ENCODE measurements at regions of chr2 and their contacts with region 1.

Region 1: DNA sequence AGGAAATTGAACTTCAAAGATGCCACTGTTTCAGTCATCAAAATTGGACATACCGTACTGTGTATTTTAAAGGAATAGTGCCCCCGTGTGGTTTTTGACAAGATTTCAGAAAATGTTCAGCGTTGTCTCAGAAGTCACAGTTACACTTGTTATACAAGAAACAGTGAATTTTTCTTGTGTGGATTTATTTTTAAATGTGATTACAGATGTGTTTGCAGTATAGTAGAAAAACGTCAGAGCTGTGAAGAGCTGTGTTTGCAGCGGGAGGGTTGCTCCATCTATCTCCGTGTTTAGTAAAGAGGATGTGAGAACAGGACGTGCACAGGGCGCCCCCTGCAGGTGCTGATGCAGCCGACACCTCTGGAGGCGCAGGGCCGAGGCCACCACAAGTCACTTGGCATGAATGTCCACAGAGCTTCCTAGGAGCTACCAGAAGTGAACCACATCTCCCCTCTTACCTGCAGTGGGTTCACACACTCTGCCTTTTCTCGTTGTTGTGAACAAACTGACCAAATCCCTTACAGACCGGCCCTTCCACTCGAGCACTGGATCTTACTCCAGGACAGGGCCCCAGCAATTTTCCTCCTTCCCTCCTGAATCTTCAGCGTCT is 73.1 kb downstream of the CACNB4 start:
- DNase-seq: peak; percentile 79
- H3K4me3 Mint-ChIP-seq: peak overlapping the region; percentile 60
- H3K27ac Mint-ChIP-seq: no peak overlapping the region
- H3K4me1 Mint-ChIP-seq: peaks cover 24% of the 10 kb centered on the region
- H3K27me3 Mint-ChIP-seq: peaks cover under 1% of the 10 kb centered on the region
- CTCF ChIP-seq: peak; percentile 93

Region 2: GRCh38 chr2:151481744-151482143 is 544.0 kb before region 1 on chr2:
- CTCF ChIA-PET with region 1: interaction called, 11 read pairs
- POLR2A ChIA-PET with region 1: no interaction called
- intact Hi-C with region 1: no loop called
- DNase-seq: no peak
- H3K4me3 Mint-ChIP-seq: no peak overlapping the region
- H3K27ac Mint-ChIP-seq: no peak overlapping the region
- H3K4me1 Mint-ChIP-seq: no peaks in the 10 kb centered on the region
- H3K27me3 Mint-ChIP-seq: no peaks in the 10 kb centered on the region
- CTCF ChIP-seq: no peak

Region 3: DNA sequence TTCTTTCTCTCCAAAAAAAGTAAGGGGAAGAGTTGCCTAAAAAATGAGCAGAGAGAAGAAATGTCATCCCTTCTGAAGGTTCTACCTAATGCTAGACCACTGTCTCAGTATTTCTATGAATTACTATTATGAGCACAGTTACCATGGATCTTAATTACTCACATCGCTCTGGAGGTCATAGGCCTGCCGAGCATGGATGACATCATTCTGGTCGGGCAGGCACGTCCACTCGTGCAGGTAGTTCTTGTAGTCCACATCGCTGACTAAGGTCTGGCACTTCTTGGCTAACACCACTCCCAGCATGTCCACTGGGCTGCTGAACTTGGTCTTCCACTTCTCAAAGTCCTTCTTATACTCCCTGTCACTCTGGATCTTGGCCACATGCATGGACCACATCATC is 398.4 kb before region 1 on chr2:
- CTCF ChIA-PET with region 1: interaction called, 5 read pairs
- POLR2A ChIA-PET with region 1: no interaction called
- intact Hi-C with region 1: loop called (anchors 10 kb)
- DNase-seq: no peak
- H3K4me3 Mint-ChIP-seq: no peak overlapping the region
- H3K27ac Mint-ChIP-seq: no peak overlapping the region
- H3K4me1 Mint-ChIP-seq: no peaks in the 10 kb centered on the region
- H3K27me3 Mint-ChIP-seq: no peaks in the 10 kb centered on the region
- CTCF ChIP-seq: no peak

Region 4: GRCh38 chr2:151782378-151783132 is 243.2 kb before region 1 on chr2:
- CTCF ChIA-PET with region 1: interaction called, 8 read pairs
- POLR2A ChIA-PET with region 1: interaction called, 3 read pairs
- intact Hi-C with region 1: loop called (anchors 10 kb)
- DNase-seq: no peak
- H3K4me3 Mint-ChIP-seq: no peak overlapping the region
- H3K27ac Mint-ChIP-seq: peak overlapping the region; percentile 61
- H3K4me1 Mint-ChIP-seq: peaks cover 6% of the 10 kb centered on the region
- H3K27me3 Mint-ChIP-seq: no peaks in the 10 kb centered on the region
- CTCF ChIP-seq: no peak

Region 5: DNA sequence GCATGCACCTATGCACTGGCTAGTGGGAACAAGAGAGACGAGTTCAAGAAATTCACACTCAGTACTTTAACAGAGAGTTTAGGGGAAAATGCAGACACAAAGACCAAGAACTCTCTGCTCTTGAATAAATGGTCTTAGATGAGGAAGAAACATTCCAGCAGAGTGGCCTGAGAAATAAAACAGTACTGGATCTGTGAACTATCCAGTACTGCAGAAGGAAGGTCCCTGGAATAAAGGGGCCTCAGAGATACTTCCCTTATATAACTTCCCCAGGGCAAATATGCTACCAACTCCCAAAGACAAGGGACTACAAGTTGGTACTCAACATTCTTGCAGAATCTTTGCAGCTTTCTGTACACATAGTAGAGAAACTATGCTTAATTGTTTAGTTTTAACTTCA is 126.6 kb before region 1 on chr2:
- CTCF ChIA-PET with region 1: no interaction called
- POLR2A ChIA-PET with region 1: no interaction called
- intact Hi-C with region 1: no loop called
- DNase-seq: no peak
- H3K4me3 Mint-ChIP-seq: no peak overlapping the region
- H3K27ac Mint-ChIP-seq: no peak overlapping the region
- H3K4me1 Mint-ChIP-seq: no peaks in the 10 kb centered on the region
- H3K27me3 Mint-ChIP-seq: no peaks in the 10 kb centered on the region
- CTCF ChIP-seq: no peak

Region 6: DNA sequence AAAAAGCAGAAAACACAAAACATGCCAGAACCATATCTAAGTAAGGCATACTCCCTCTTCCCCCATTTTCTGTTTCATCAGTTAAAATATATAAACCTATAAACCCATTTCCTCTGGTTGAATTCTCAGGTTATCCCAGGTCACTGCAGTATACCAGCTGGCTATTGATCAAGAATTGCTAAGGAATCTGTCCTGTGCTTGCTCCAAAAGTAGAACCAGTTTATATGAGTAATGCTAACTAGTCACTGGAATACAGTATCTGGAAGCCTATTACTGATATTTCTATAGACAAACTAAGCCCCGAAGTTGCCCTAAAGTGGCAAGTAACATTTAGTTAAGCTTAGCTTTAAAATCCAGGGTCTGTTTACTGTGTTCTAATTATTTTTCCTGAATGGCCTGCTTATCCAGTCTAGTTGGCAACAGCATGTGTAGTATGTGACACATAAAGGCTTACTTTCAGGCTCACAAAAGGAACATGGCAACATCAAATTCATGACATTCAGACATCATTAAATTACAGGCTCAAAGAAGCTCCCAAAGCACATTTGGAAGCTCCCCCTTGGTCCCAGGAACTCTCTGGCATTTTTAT is 94.7 kb before region 1 on chr2:
- CTCF ChIA-PET with region 1: interaction called, 12 read pairs
- POLR2A ChIA-PET with region 1: no interaction called
- intact Hi-C with region 1: no loop called
- DNase-seq: no peak
- H3K4me3 Mint-ChIP-seq: no peak overlapping the region
- H3K27ac Mint-ChIP-seq: no peak overlapping the region
- H3K4me1 Mint-ChIP-seq: peaks cover 20% of the 10 kb centered on the region
- H3K27me3 Mint-ChIP-seq: no peaks in the 10 kb centered on the region
- CTCF ChIP-seq: no peak

Region 7: DNA sequence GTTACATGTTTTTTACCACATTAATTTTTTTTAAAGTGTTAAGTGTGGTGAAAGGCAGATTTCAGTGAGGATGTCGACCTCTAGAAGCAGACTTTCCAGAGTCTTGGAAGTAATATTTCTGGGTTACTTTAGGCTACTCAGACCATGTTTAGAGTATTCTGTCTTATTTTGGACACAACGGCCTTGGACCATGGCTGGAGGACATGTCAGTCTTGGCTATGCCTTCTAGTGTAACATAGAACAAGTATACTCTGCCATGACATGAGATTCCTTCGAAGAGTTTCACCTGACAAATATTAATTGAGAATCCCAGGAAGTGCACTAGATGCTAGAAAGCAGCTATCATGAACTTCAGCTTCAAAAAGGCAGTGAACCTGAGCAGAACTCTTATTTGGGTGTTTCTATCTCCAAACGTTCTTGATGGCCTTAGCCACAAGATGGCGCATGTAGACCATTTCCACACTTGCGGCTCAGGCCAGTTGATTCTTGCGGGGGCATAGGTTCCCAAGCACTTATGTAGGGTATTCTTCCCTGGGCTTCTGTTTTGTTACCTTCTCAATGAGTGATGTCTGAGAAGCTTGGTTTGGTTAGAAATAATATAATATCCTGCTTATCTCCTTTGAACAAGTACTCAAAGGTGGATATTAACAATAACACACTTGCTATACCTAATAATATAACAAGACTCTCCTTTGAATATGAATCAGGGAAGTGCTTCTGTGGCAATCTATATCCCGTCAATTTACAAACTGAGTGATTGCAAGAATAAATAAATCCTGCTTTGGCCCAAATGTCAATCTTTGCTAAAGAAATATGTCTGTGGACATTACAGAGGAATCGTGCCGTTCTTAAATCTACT is 11.1 kb after region 1 on chr2:
- CTCF ChIA-PET with region 1: interaction called, 20 read pairs
- POLR2A ChIA-PET with region 1: interaction called, 3 read pairs
- intact Hi-C with region 1: no loop called
- DNase-seq: peak; percentile 76
- H3K4me3 Mint-ChIP-seq: no peak overlapping the region
- H3K27ac Mint-ChIP-seq: no peak overlapping the region
- H3K4me1 Mint-ChIP-seq: no peaks in the 10 kb centered on the region
- H3K27me3 Mint-ChIP-seq: no peaks in the 10 kb centered on the region
- CTCF ChIP-seq: peak; percentile 86